ENCODE measurements at regions of chr16 and their contacts with region 1.

Region 1: DNA sequence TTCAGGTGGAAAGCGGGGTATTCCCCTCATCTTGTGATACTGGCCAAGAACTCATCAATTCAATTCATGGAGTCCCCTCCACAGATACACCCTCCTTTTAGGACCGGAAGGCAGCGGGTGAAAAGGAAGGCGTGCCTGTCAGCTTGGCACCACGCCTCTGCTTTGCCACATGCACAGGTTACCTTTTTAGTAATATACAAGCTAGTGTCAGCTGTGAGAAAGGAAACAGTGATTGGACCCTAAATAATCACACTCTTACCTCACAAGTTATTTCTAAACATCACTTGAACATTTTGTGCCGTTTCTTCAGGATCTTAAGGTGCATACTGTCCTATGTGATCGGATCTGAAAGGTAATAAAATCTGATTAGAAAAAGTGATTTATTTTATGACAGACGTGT is 15.7 kb downstream of the ZDHHC7 start:
- DNase-seq: no peak
- ATAC-seq: no peak
- H3K4me3 ChIP-seq: no peak overlapping the region
- H3K27ac ChIP-seq: peak overlapping the region; percentile 97
- H3K4me1 ChIP-seq: peaks cover 58% of the 10 kb centered on the region
- H3K27me3 ChIP-seq: no peaks in the 10 kb centered on the region
- CTCF ChIP-seq: no peak

Region 2: GRCh38 chr16:85027349-85027957 is 31.8 kb after region 1 on chr16 and contains the start of gene KIAA0513:
- CTCF ChIA-PET with region 1: no interaction called
- POLR2A ChIA-PET with region 1: no interaction called
- intact Hi-C with region 1: loop called (anchors 2 kb)
- DNase-seq: peak; percentile 90
- ATAC-seq: peak; percentile 53
- H3K4me3 ChIP-seq: peak within 1 kb of the TSS; percentile 79
- H3K27ac ChIP-seq: peak within 1 kb of the TSS; percentile 84
- H3K4me1 ChIP-seq: peaks cover 46% of the 10 kb centered on the region
- H3K27me3 ChIP-seq: no peaks in the 10 kb centered on the region
- CTCF ChIP-seq: no peak
- total RNA-seq, gene KIAA0513: 5.5 and 7.8 TPM in 2 replicates

Region 3: GRCh38 chr16:85046931-85047866 is 51.5 kb after region 1 on chr16:
- CTCF ChIA-PET with region 1: no interaction called
- POLR2A ChIA-PET with region 1: interaction called, 23 read pairs
- intact Hi-C with region 1: no loop called
- DNase-seq: no peak
- ATAC-seq: no peak
- H3K4me3 ChIP-seq: no peak overlapping the region
- H3K27ac ChIP-seq: no peak overlapping the region
- H3K4me1 ChIP-seq: no peaks in the 10 kb centered on the region
- H3K27me3 ChIP-seq: no peaks in the 10 kb centered on the region
- CTCF ChIP-seq: no peak

Region 4: DNA sequence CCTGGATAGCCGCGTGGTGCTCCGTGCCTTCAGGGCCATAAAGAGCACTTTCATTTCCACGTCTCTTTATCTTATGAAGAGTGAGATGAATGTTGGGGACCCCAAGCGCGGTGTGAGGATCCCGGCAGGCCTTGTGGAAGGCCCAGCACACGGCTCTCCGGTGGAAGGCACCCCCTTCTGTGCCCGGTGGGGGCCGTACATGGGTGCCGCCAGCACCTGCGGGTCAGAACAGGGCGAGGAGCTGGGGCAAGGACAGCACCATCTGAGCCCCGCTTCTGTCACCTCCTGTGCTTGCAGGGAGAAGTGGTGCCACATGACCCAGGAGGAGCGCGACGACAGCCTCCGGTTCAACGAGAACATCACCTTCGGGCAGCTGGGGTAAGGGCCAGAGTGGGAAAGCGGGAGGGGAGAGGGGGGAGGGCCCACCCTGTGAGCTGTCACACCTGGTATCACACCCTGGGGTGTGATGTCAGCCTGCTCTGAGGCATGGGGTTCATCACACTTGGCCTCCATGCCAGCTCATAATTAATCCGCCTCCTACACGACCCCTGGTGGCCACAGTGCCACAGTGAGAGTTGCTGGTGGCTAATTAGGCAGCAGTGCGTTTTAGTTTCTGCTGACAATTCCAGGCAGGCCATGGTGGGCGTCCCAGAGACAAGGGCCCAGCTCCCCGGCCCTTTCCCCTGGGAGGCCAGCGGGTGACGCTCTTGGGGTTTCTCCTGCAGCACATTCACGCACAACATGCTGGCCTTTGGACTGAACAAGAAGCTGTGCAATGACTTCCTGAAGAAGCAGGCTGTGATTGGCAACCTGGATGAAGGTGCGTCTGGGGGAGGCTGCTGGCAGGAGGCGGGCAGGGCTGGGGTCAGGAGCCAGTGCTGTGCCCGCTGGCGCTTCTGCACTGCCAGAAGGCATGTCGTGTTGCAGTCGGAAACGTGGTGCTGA is 91.0 kb after region 1 on chr16:
- CTCF ChIA-PET with region 1: no interaction called
- POLR2A ChIA-PET with region 1: no interaction called
- intact Hi-C with region 1: loop called (anchors 10 kb)
- DNase-seq: peak; percentile 64
- ATAC-seq: peak; percentile 81
- H3K4me3 ChIP-seq: no peak overlapping the region
- H3K27ac ChIP-seq: no peak overlapping the region
- H3K4me1 ChIP-seq: no peaks in the 10 kb centered on the region
- H3K27me3 ChIP-seq: no peaks in the 10 kb centered on the region
- CTCF ChIP-seq: peak; percentile 63